Left ventricle myocardium inferior (tissue), 1 donor: ENCODE measurements at regions of chr2 and their contacts with region 1.

Region 1: GRCh38 chr2:65129826-65130663 is at the start of gene RAB1A:
- DNase-seq: peak; percentile 100
- H3K4me3 ChIP-seq: peak within 1 kb of the TSS; percentile 93
- H3K27ac ChIP-seq: peak within 1 kb of the TSS; percentile 97
- H3K4me1 ChIP-seq: peaks cover 61% of the 10 kb centered on the region
- H3K27me3 ChIP-seq: no peaks in the 10 kb centered on the region
- CTCF ChIP-seq: peak; percentile 61
- total RNA-seq, gene RAB1A: 115 TPM

Region 2: DNA sequence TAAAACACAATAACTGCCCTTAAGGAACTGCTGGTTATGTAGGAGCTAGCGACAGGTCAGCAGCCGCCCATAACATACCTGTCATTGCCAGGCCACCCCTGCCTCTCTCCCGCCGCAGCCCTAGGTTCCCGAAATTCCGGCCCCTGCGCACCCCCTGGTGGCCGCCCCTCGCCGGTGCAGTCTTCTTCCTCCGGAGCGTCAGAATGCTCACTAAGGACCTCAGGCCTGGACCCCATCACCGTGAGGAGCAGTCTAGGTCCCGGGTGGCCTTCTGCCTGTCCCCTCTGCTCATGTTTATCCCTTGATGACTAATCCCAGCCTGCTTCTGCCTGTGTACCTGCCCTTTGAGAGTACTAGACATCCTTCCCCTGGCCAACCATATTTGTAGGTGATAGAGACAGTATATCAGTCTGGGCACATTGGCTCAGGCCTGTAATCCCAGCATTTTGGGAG is 256.5 kb before region 1 on chr2:
- intact Hi-C with region 1: no loop called
- DNase-seq: peak; percentile 78
- H3K4me3 ChIP-seq: peak overlapping the region; percentile 28
- H3K27ac ChIP-seq: no peak overlapping the region
- H3K4me1 ChIP-seq: peaks cover 18% of the 10 kb centered on the region
- H3K27me3 ChIP-seq: no peaks in the 10 kb centered on the region
- CTCF ChIP-seq: peak; percentile 97

Region 3: GRCh38 chr2:65070172-65070830 is 59.7 kb before region 1 on chr2:
- intact Hi-C with region 1: loop called (anchors 5 kb)
- DNase-seq: no peak
- H3K4me3 ChIP-seq: no peak overlapping the region
- H3K27ac ChIP-seq: peak overlapping the region; percentile 65
- H3K4me1 ChIP-seq: peaks cover 93% of the 10 kb centered on the region
- H3K27me3 ChIP-seq: no peaks in the 10 kb centered on the region
- CTCF ChIP-seq: peak; percentile 42